K562 (cell line): ENCODE measurements at regions of chr5 and their contacts with region 1.

Region 1: DNA sequence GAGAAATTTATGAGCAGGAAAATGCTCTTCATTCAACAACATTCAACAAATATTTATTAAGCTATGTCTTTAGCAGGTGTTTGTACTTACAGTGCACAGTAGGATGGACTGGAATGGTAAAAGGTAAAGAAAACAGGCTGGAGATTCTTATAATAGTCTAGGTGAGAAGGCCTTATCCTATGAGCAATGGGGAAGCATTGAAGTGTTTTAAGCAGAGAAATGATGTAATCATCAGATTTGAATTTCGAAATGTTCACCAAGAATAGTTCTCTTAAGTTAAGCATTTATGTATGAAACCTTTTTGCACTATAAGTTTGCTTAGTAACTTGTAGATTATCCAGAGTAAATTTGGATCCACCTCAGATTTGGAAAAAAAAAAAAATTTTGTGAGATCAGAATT is 209.3 kb downstream of the NR3C1 start:
- DNase-seq: no peak
- ATAC-seq: no peak
- H3K4me3 ChIP-seq: no peak overlapping the region
- H3K27ac ChIP-seq: no peak overlapping the region
- H3K4me1 ChIP-seq: peaks cover 0 to 10% of the 10 kb centered on the region in 2 experiments; a peak in 3 of 5 replicates
- H3K27me3 ChIP-seq: no peaks in the 10 kb centered on the region
- CTCF ChIP-seq: no peak
- EP300 ChIP-seq: no peak
- POLR2A ChIP-seq: no peak
- RAD21 ChIP-seq: no peak

Region 2: DNA sequence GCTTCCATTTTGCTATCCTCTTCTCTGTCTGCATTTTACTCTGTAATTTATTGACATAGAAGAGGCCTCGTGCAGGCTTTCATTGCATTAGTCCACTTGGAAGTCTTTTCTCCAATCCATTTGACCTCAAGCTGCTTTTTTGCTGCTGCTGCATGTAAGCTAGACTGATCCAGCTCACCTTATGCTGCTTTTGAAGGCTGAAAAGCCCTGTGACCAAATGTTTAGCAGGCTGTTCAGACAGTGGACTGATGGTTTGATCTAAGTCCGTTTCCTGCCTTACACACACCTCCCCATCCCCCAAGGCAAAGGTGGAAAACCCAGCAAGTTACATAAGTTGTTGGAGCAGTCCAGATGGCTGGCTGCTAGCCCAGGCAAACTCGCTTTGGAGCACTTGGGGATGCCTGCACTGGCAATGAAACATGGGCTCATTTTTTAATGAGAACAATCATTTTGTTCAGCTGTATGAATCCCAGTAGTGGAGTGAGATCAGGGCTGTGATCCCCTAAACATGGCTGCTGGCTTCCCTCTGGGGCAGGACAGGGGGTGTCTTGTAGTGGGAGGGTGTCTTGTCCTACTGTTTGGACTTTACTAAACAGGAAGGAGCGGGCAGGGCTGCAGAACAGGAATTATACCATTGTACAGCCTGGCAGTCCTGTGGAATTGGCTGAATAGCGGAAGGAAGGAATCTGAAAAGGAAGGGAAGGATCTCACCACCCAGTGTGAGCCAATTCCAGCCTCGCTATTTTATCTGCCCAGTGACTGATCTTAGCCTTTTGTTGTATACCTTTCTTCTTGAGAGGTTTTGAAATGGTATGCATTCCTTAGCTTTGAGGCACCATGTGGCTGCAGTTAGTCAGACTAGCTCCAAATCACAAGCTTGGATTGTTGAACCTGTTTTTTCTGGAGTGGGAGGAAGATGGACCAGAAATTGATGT is 212.1 kb before region 1 on chr5:
- CTCF ChIA-PET with region 1: no interaction called
- POLR2A ChIA-PET with region 1: no interaction called
- in situ Hi-C with region 1: no loop called
- intact Hi-C with region 1: no loop called
- DNase-seq: no peak
- ATAC-seq: no peak
- H3K4me3 ChIP-seq: no peak overlapping the region
- H3K27ac ChIP-seq: no peak overlapping the region
- H3K4me1 ChIP-seq: no peaks in the 10 kb centered on the region; a peak in 1 of 5 replicates
- H3K27me3 ChIP-seq: 0 out of 5 replicates have a peak, but pooled peaks cover 0 to 10% of the 10 kb centered on the region in 2 experiments
- CTCF ChIP-seq: no peak
- EP300 ChIP-seq: no peak
- POLR2A ChIP-seq: no peak
- RAD21 ChIP-seq: no peak

Region 3: DNA sequence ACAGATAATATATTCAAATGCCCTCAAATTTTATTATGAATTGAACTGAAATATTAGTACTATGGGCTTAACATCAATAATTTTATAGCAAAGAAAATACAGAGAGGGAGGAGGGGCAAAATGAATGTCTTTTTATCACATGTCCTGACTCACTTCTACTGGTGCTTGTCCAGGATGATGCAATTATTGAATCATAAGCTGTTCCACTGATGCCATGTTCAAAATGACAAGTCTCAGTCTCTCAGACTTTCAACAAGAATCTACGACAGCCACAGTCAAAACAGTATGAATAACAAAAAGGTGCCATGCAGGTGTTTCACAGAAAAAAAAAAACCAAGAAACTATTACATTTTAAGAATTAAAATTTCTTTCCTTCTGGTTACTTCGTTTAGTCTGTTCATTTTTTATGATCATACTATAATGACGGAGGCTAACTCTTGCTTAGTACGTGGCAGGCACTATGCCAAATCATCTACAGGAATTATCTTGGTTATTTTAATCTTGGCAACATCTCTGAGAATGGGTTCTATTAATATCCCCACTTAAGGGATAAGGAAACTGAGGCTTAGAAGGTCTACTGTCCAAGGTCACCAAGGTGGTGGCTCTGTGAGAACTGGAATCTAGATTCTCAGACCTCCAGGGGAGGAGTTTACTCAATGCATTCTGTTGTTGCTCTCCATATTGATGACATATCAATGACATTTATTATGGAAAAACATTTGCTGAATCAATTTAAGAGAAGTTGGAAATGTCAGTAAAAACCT is 147.8 kb after region 1 on chr5:
- CTCF ChIA-PET with region 1: no interaction called
- POLR2A ChIA-PET with region 1: no interaction called
- in situ Hi-C with region 1: no loop called
- intact Hi-C with region 1: loop called (anchors 5 kb)
- DNase-seq: peak in 1 of 4 experiments; percentile 34
- ATAC-seq: peak; percentile 81
- H3K4me3 ChIP-seq: no peak overlapping the region
- H3K27ac ChIP-seq: 0 out of 3 replicates have a peak overlapping the region, but pooled peaks have one; percentile 0
- H3K4me1 ChIP-seq: peaks cover 0 to 23% of the 10 kb centered on the region in 2 experiments; a peak in 2 of 5 replicates
- H3K27me3 ChIP-seq: no peaks in the 10 kb centered on the region
- CTCF ChIP-seq: no peak
- EP300 ChIP-seq: peak; percentile 77
- POLR2A ChIP-seq: no peak
- RAD21 ChIP-seq: peak in 1 of 2 experiments; percentile 14; a peak in 1 of 4 replicates